ENCODE measurements at regions of chr20 and their contacts with region 1.

Region 1: GRCh38 chr20:36613974-36614373 is 8.4 kb downstream of the RAB5IF start:
- DNase-seq: no peak
- ATAC-seq: no peak
- H3K4me3 Mint-ChIP-seq: no peak overlapping the region
- H3K27ac Mint-ChIP-seq: peak overlapping the region; percentile 45
- H3K4me1 Mint-ChIP-seq: peaks cover 26% of the 10 kb centered on the region
- H3K27me3 Mint-ChIP-seq: no peaks in the 10 kb centered on the region

Region 2: DNA sequence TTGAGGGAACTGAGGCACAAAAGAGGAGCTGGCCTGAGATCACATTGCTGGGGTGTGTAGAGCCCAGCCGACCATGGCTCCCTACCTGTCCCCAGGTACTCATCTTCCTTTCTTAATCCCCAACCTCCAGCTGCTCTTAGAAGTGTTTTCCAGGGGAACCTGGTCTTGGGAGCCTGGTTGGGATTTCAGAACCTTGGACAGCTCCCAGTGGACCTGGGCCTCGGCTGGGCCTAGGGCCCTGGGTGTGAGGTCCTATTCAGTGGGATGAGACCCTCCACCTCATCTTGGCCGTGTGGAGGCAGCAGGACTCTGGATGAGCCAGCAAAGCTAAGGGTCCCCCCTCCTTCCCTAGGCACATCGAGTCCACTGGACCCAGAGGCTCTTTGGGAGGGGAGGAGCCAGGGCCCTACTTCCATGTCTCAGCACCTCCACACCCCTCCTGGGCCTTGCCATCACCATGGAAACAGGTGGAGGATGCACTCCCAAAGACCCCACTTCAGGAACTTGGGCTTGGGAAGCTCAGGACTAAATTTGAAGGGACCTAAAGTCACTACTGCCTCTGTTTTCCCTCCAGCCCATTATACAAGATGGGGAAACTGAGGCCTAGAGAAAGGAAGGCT is 269.3 kb before region 1 on chr20:
- CTCF ChIA-PET with region 1: no interaction called
- DNase-seq: peak; percentile 48
- ATAC-seq: no peak
- H3K4me3 Mint-ChIP-seq: no peak overlapping the region
- H3K27ac Mint-ChIP-seq: no peak overlapping the region
- H3K4me1 Mint-ChIP-seq: no peaks in the 10 kb centered on the region
- H3K27me3 Mint-ChIP-seq: no peaks in the 10 kb centered on the region

Region 3: GRCh38 chr20:36519944-36520343 is 94.0 kb before region 1 on chr20:
- CTCF ChIA-PET with region 1: no interaction called
- DNase-seq: no peak
- ATAC-seq: peak; percentile 16
- H3K4me3 Mint-ChIP-seq: no peak overlapping the region
- H3K27ac Mint-ChIP-seq: peak overlapping the region; percentile 10
- H3K4me1 Mint-ChIP-seq: peaks cover 17% of the 10 kb centered on the region
- H3K27me3 Mint-ChIP-seq: no peaks in the 10 kb centered on the region

Region 4: GRCh38 chr20:36624068-36624943 is 10.3 kb after region 1 on chr20:
- CTCF ChIA-PET with region 1: interaction called, 11 read pairs
- DNase-seq: no peak
- ATAC-seq: no peak
- H3K4me3 Mint-ChIP-seq: no peak overlapping the region
- H3K27ac Mint-ChIP-seq: peak overlapping the region; percentile 48
- H3K4me1 Mint-ChIP-seq: peaks cover 43% of the 10 kb centered on the region
- H3K27me3 Mint-ChIP-seq: no peaks in the 10 kb centered on the region

Region 5: GRCh38 chr20:36645998-36646397 is 32.0 kb after region 1 on chr20 and contains the start of gene SLA2:
- CTCF ChIA-PET with region 1: interaction called, 32 read pairs
- DNase-seq: peak; percentile 91
- ATAC-seq: peak; percentile 76
- H3K4me3 Mint-ChIP-seq: peak within 1 kb of the TSS; percentile 96
- H3K27ac Mint-ChIP-seq: peak within 1 kb of the TSS; percentile 98
- H3K4me1 Mint-ChIP-seq: peaks cover 40% of the 10 kb centered on the region
- H3K27me3 Mint-ChIP-seq: no peaks in the 10 kb centered on the region
- total RNA-seq, gene SLA2: 109 to 140 TPM

Region 6: GRCh38 chr20:36728986-36729385 is 115.0 kb after region 1 on chr20:
- CTCF ChIA-PET with region 1: interaction called, 16 read pairs
- DNase-seq: peak; percentile 49
- ATAC-seq: peak; percentile 61
- H3K4me3 Mint-ChIP-seq: no peak overlapping the region
- H3K27ac Mint-ChIP-seq: peak overlapping the region; percentile 45
- H3K4me1 Mint-ChIP-seq: peaks cover 31% of the 10 kb centered on the region
- H3K27me3 Mint-ChIP-seq: no peaks in the 10 kb centered on the region

Region 7: GRCh38 chr20:36773597-36774390 is 159.8 kb after region 1 on chr20 and contains the start of gene DSN1:
- CTCF ChIA-PET with region 1: interaction called, 10 read pairs
- DNase-seq: peak; percentile 99
- ATAC-seq: peak; percentile 94
- H3K4me3 Mint-ChIP-seq: peak within 1 kb of the TSS; percentile 86
- H3K27ac Mint-ChIP-seq: peak within 1 kb of the TSS; percentile 95
- H3K4me1 Mint-ChIP-seq: peaks cover 37% of the 10 kb centered on the region
- H3K27me3 Mint-ChIP-seq: no peaks in the 10 kb centered on the region
- total RNA-seq, gene DSN1: 36.0 to 42.7 TPM